Sciatic nerve (tissue), 2 donors: ENCODE measurements at regions of chr2 and their contacts with region 1.

Region 1: DNA sequence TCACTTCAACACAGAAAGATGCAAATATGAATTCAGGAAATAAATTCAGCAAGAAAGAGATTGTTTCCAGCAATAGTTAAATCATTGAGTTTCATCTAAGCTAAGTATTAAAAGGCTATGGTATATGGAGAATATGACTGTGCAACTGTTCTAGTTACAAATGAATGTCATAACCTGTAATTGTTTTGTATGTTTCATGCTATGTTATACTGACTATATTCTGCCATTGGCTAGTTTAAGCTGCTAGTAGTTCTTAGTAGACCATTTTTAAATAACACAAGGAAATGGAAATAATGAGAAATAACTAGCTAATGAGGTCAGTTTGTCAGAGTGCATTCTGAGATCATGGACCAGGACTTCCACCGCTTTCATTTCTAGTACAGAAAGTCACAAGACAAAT is 1154.9 kb upstream of the TMEFF2 start:
- DNase-seq: no peak
- ATAC-seq: no peak

Region 2: DNA sequence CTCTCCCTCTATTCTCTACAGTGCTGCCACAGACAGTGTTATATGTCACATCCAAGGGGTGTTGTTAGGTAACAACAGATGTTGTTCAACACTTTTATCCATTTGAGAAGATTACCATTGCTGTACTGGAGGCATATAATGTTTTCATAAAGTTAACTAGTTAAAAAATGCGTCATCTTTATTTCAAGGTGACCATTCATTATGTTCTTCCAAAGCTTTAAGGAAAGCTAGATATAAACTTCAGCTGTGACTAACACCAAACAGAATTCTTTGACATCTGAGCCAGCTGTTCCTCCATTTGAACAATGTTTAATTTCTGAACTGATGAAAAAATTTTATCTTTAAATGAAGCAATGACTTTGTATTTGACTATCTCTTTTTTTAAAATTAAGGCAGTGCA is 55.3 kb before region 1 on chr2:
- intact Hi-C with region 1: loop called (anchors 2 kb)
- DNase-seq: no peak
- ATAC-seq: no peak

Region 3: GRCh38 chr2:194054313-194054712 is 704.7 kb after region 1 on chr2:
- intact Hi-C with region 1: no loop called
- DNase-seq: no peak
- ATAC-seq: no peak